H1 (cell line): ENCODE measurements at regions of chr2 and their contacts with region 1.

Region 1: GRCh38 chr2:85132834-85133637 is at the start of gene TCF7L1:
- DNase-seq: peak; percentile 51 to 96
- H3K4me3 ChIP-seq: peak within 1 kb of the TSS; percentile 90 to 97 (median 93)
- H3K27ac ChIP-seq: peak within 1 kb of the TSS; percentile 84
- H3K4me1 ChIP-seq: peaks cover 10 to 17% (median 12%) of the 10 kb centered on the region in 4 experiments
- H3K27me3 ChIP-seq: no peaks in the 10 kb centered on the region
- CTCF ChIP-seq: peak; percentile 81 to 84 (median 84)
- EP300 ChIP-seq: no peak
- POLR2A ChIP-seq: peak; percentile 53 to 55; a peak in 2 of 3 replicates
- RAD21 ChIP-seq: peak; percentile 83 to 90
- total RNA-seq, gene TCF7L1: 108 and 110 TPM in 2 replicates

Region 2: DNA sequence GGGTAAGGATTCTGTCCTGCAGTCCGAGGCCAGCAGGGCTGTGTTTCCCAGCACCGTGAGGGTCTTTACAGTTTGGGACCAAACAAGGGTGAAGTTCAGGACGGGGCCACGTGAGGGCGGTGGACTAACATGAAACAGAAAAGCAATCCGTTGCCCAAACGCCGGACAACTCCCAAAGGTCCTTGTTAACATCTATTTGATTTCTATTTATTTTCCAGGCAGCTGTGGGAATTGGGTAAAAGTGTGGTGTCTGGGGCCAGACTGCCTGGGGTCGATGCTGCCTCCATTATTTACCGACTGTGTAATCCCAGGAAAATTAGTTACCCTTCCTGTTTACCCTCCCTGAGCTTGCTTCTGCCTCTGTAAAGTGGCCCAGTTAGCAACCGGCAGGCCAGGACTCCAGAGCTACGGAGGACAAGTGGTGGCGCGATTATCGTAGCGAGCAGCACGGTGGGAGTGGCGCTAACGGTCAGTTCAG is 66.1 kb before region 1 on chr2:
- CTCF ChIA-PET with region 1: interaction called, 15 read pairs
- POLR2A ChIA-PET with region 1: interaction called, 20 read pairs
- DNase-seq: peak; percentile 65 to 95
- H3K4me3 ChIP-seq: peak overlapping the region in 3 of 4 experiments; percentile 25 to 49 (median 47); a peak in 4 of 8 replicates
- H3K27ac ChIP-seq: no peak overlapping the region
- H3K4me1 ChIP-seq: peaks cover 8 to 18% (median 10%) of the 10 kb centered on the region in 4 experiments
- H3K27me3 ChIP-seq: peaks cover 0 to 4% (median 0%) of the 10 kb centered on the region in 4 experiments; a peak in 4 of 7 replicates
- CTCF ChIP-seq: peak; percentile 86 to 91 (median 90)
- EP300 ChIP-seq: no peak
- POLR2A ChIP-seq: no peak
- RAD21 ChIP-seq: peak; percentile 92

Region 3: GRCh38 chr2:85162746-85163301 is 29.8 kb after region 1 on chr2:
- CTCF ChIA-PET with region 1: interaction called, 4 read pairs
- POLR2A ChIA-PET with region 1: interaction called, 23 read pairs
- DNase-seq: no peak
- H3K4me3 ChIP-seq: no peak overlapping the region
- H3K27ac ChIP-seq: no peak overlapping the region
- H3K4me1 ChIP-seq: peaks cover 15 to 46% (median 29%) of the 10 kb centered on the region in 4 experiments
- H3K27me3 ChIP-seq: no peaks in the 10 kb centered on the region; a peak in 1 of 7 replicates
- CTCF ChIP-seq: no peak
- EP300 ChIP-seq: no peak
- POLR2A ChIP-seq: no peak
- RAD21 ChIP-seq: no peak

Region 4: GRCh38 chr2:85188852-85189587 is 56.0 kb after region 1 on chr2:
- CTCF ChIA-PET with region 1: interaction called, 29 read pairs
- POLR2A ChIA-PET with region 1: interaction called, 6 read pairs
- DNase-seq: no peak
- H3K4me3 ChIP-seq: no peak overlapping the region
- H3K27ac ChIP-seq: no peak overlapping the region
- H3K4me1 ChIP-seq: peaks cover 2 to 9% (median 6%) of the 10 kb centered on the region in 4 experiments; a peak in 5 of 7 replicates
- H3K27me3 ChIP-seq: no peaks in the 10 kb centered on the region
- CTCF ChIP-seq: peak; percentile 14 to 30 (median 24)
- EP300 ChIP-seq: no peak
- POLR2A ChIP-seq: no peak
- RAD21 ChIP-seq: peak; percentile 16 to 35; a peak in 2 of 4 replicates

Region 5: DNA sequence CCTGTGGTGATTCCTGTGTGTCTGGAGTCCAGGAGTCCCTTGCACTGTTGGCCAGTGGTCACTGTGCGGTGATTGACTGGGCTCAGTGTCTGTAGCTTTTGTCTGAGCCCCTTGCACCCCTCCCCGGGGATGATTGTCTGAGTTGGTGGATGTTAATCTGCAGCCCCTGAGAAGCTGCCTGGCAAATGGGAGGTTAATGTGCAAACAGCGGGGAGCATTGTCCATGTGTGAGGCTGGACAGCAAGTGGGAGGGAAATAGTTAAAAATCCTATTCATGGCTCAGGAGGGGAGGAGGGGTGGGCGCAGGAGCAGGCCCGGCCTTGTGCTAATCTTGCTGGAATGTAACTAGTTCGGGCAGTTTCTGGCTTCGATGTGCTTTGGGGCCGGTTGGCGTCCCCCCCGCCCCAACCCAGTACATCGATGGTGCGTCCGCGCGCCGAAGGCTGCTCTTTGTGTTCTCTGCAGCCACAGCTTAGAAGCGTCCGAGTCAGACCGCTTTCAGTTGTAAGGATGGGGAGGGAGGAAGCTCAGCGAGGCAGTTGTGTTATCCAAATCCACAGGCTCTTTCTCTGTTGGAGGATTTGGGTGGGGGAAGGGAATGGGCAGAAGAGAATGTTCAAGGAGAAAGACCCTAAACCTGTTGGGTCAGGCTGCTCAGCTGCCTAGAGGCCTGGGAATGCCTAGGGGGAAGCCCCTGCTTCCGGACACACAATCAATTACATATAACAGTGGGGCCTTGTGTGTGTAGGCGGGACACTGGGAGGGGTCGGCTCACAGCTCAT is 123.0 kb after region 1 on chr2:
- CTCF ChIA-PET with region 1: interaction called, 11 read pairs
- POLR2A ChIA-PET with region 1: interaction called, 22 read pairs
- DNase-seq: peak in 1 of 2 experiments; percentile 81
- H3K4me3 ChIP-seq: peak overlapping the region; percentile 1 to 48 (median 30); a peak in 7 of 8 replicates
- H3K27ac ChIP-seq: peak overlapping the region; percentile 97
- H3K4me1 ChIP-seq: peaks cover 43 to 65% (median 57%) of the 10 kb centered on the region in 4 experiments
- H3K27me3 ChIP-seq: no peaks in the 10 kb centered on the region
- CTCF ChIP-seq: no peak
- EP300 ChIP-seq: peak in 1 of 2 experiments; percentile 72; a peak in 1 of 3 replicates
- POLR2A ChIP-seq: peak; percentile 37 to 69
- RAD21 ChIP-seq: peak in 1 of 2 experiments; percentile 27; a peak in 2 of 4 replicates

Region 6: DNA sequence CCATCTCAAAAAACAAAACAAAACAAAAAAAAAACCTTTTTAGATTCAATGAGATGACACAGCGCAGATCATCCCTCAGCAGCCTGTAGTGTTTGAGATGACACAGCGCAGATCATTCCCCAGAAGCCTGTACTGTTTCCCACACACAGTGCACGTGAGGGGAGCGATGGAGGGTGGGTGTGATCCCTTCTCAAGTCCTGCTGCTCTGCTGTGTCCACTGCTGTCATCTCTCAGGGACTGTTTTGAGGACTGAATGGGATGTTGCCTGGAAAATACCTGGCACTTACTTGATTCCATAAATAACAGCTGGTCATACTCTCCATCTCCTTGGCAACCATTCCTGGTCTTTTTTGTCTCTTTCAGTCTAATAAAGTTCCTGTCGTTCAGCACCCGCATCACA is 169.1 kb after region 1 on chr2:
- CTCF ChIA-PET with region 1: interaction called, 67 read pairs
- POLR2A ChIA-PET with region 1: interaction called, 18 read pairs
- DNase-seq: no peak
- H3K4me3 ChIP-seq: no peak overlapping the region
- H3K27ac ChIP-seq: no peak overlapping the region
- H3K4me1 ChIP-seq: 0 out of 7 replicates have a peak, but pooled peaks cover 0 to 2% (median 0%) of the 10 kb centered on the region in 4 experiments
- H3K27me3 ChIP-seq: no peaks in the 10 kb centered on the region
- CTCF ChIP-seq: no peak
- EP300 ChIP-seq: no peak
- POLR2A ChIP-seq: no peak
- RAD21 ChIP-seq: no peak

Region 7: DNA sequence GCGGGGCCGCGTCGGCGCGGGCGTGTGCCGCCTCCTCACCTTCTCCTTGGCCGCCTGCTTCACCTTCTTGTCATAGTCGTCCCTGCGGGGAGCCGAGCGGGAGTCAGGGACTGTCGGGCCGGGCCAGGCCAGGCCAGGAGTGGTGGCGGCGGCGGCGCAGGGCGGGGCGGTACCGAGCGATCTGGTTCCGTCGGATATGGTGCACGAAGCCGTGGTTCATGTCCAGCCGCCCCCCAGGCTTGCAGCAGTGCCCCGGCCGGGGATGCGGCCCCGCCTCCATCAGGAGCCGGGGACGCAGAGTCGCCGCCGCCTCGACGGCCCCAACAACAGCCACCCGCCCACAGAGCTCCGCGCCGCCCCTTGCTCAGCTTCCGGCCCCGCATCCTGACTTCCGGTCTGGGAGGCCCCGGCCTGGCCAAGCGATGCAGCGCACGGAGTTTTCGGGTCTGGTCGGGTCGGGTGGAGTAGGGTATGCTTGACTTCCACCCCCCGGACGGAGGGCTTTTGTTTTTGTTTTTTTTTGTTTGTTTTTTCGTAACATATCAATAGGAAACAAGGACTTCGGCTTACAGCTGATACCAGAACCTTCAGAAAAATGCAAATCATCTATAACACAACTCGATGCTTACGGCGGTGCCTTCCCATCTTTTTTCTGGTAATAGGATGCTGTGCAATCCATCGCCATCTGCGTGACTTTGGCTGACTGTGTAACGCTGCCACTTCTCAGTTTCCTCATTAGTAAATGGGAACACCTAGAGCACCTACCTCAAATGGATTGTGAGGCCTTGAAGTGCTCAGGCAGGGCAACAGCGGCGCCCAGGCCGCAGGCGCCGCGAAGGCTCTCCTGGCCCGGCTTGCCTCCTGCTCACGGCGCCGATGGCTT is 478.9 kb after region 1 on chr2 and contains the start of gene C2orf68:
- CTCF ChIA-PET with region 1: no interaction called
- POLR2A ChIA-PET with region 1: no interaction called
- DNase-seq: peak; percentile 70 to 92
- H3K4me3 ChIP-seq: peak within 1 kb of the TSS; percentile 78 to 87 (median 84)
- H3K27ac ChIP-seq: peak within 1 kb of the TSS; percentile 73
- H3K4me1 ChIP-seq: peaks cover 0 to 1% (median under 1%) of the 10 kb centered on the region in 4 experiments; a peak in 4 of 7 replicates
- H3K27me3 ChIP-seq: no peaks in the 10 kb centered on the region
- CTCF ChIP-seq: no peak
- EP300 ChIP-seq: no peak
- POLR2A ChIP-seq: peak; percentile 73 to 84
- RAD21 ChIP-seq: no peak
- total RNA-seq, gene C2orf68: 40.9 and 46.3 TPM in 2 replicates